Activated CD8-positive, alpha-beta T cell treated with anti-CD3 and anti-CD28 coated beads, Interleukin-2, amount 10 ng/mL, durations not matched to agents 7 days and 5 days (primary cell): ENCODE measurements at regions of chr12 and their contacts with region 1.

Region 1: DNA sequence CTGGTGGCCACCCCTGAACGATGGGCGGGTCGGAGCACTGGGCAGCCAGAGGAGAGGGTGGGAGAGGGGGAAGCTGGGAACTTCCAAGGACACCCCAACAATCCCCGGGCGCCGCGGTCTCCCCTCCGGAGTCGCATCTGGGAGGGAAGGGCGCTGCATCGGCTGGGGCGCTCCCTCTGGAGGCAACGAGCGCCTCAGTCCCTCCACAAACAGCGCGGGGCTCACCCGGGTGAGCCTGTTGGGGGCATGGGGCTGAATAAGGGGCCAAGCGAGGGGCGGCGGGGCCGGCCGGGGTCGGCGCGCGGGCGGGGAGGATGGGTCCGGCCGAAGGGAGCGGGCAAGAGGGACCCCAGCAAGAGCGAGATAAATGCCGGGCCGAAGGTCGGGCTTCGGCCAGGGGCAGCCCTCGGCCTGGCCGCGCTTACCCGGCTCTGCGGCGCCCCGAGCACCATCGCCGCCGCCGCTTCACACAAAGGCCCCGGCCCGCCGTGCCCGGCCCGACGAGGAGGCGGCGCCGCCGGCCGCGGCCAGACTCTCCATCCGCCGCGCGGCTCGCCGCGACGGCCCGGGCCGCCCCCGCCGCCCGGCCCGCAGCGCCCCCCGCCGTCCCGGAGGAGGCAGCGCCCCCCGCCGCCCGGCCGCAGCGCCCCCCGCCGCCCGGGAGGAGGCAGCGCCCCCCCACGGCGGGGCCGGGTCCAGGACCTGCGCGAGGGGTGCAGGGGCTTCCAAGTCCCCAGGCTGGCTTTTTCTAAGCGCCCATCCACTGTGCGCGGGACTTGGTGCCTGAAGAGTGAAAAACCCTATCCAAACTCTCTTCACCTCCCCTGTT is at the start of gene ZBTB39:
- DNase-seq: peak; percentile 68
- ATAC-seq: peak; percentile 79
- H3K4me3 Mint-ChIP-seq: peak within 1 kb of the TSS; percentile 95
- H3K27ac Mint-ChIP-seq: peak within 1 kb of the TSS; percentile 83
- H3K4me1 Mint-ChIP-seq: peaks cover 60% of the 10 kb centered on the region
- H3K27me3 Mint-ChIP-seq: no peaks in the 10 kb centered on the region
- total RNA-seq, gene ZBTB39: 7.7 to 8.2 TPM

Region 2: DNA sequence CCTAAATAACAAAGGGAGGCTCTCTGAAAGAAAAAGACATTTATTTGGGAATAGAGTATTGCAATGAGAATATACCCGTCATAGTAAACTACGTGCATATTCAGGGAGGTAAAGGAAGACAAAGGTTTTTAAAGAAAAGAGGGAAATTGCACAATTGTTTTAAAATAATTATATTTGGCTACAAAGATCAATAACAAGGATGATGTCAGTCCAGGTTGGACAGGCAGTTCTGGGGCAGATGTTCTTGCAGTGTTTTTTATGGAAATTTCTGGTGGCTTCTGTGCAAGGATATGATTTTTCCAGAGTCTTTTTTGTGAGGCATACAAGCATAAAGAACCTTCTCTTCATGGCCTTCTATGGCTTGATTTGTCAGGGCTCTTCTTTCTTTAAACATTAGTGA is 213.5 kb before region 1 on chr12:
- CTCF ChIA-PET with region 1: no interaction called
- POLR2A ChIA-PET with region 1: no interaction called
- DNase-seq: no peak
- ATAC-seq: no peak
- H3K4me3 Mint-ChIP-seq: no peak overlapping the region
- H3K27ac Mint-ChIP-seq: no peak overlapping the region
- H3K4me1 Mint-ChIP-seq: no peaks in the 10 kb centered on the region
- H3K27me3 Mint-ChIP-seq: peaks cover 4% of the 10 kb centered on the region

Region 3: DNA sequence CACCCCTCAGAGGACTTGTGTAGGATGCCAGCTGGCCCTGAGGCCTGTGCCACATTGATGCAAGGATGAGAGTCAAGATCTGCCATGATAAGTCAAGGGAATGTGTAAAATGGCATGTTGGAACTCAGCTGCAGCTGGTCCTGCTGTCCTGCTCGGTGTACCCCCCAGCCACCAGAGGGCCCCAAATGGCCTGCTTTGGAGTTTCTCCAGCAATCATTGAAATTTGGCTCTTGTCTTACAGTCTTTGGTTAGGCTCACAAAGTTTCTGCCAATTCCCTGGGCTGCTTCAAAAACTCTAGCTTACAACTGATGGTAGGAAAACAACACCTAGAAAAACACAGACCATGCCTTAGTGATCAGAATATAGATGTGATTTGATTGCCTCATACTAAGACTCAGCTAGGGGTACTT is 166.3 kb before region 1 on chr12:
- CTCF ChIA-PET with region 1: interaction called, 17 read pairs
- POLR2A ChIA-PET with region 1: no interaction called
- DNase-seq: peak; percentile 51
- ATAC-seq: peak; percentile 47
- H3K4me3 Mint-ChIP-seq: no peak overlapping the region
- H3K27ac Mint-ChIP-seq: no peak overlapping the region
- H3K4me1 Mint-ChIP-seq: peaks cover 13% of the 10 kb centered on the region
- H3K27me3 Mint-ChIP-seq: peaks cover 2% of the 10 kb centered on the region

Region 4: DNA sequence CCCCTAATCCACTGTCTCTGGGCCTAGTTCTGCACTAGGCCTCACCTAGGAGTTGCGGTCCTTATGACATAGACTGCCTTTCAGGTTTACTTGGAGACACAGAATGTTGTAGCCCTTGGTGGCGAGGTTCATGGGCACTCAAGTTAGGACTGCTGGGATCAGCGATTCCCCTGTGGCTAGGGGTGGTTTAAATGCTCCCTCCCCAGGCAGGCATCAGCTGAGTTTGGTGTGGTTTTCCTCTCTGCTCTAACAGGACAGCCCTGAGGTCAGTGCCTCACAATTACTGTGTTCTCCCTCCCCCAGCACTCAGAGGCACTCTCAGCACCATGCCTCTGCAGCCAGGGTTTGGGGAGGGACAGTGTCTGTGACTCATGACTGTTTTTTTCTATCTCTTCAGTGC is 26.6 kb before region 1 on chr12:
- CTCF ChIA-PET with region 1: no interaction called
- POLR2A ChIA-PET with region 1: no interaction called
- DNase-seq: no peak
- ATAC-seq: no peak
- H3K4me3 Mint-ChIP-seq: no peak overlapping the region
- H3K27ac Mint-ChIP-seq: no peak overlapping the region
- H3K4me1 Mint-ChIP-seq: peaks cover 2% of the 10 kb centered on the region
- H3K27me3 Mint-ChIP-seq: no peaks in the 10 kb centered on the region

Region 5: DNA sequence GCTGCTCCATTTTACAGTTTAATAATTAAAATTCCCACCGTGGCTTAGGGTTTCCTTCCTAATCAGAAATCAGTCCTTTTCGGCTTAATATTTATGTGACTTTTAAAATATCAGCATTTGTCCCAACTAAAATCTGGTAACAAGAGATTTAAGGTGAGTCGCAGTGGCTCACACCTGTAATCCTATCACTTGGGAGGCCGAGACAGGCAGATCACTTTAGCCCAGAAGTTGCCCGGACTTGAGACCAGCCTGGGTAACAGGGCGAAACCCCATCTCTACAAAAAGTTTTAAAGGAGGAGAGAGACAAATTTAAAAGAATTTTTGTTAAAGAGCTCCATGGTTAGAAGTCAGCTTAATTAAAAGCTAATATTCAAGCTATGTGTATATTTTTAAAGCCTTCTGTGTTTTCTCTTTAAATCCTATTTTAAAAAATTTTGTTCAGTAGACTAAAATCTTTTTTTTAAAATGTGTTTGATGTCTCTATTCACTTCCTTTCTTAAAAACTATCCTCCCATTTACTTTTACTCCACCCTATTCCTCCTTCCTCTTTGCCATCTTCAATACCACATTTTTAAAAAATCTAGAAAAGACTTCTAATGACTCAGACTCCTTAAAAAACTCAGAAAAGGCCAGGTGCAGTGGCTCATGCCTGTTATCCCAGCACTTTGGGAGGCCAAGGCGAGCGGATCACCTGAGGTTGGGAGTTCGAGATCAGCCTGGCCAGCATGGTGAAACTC is 14.0 kb after region 1 on chr12:
- CTCF ChIA-PET with region 1: interaction called, 29 read pairs
- POLR2A ChIA-PET with region 1: interaction called, 4 read pairs
- DNase-seq: no peak
- ATAC-seq: no peak
- H3K4me3 Mint-ChIP-seq: no peak overlapping the region
- H3K27ac Mint-ChIP-seq: no peak overlapping the region
- H3K4me1 Mint-ChIP-seq: peaks cover 6% of the 10 kb centered on the region
- H3K27me3 Mint-ChIP-seq: peaks cover 3% of the 10 kb centered on the region

Region 6: DNA sequence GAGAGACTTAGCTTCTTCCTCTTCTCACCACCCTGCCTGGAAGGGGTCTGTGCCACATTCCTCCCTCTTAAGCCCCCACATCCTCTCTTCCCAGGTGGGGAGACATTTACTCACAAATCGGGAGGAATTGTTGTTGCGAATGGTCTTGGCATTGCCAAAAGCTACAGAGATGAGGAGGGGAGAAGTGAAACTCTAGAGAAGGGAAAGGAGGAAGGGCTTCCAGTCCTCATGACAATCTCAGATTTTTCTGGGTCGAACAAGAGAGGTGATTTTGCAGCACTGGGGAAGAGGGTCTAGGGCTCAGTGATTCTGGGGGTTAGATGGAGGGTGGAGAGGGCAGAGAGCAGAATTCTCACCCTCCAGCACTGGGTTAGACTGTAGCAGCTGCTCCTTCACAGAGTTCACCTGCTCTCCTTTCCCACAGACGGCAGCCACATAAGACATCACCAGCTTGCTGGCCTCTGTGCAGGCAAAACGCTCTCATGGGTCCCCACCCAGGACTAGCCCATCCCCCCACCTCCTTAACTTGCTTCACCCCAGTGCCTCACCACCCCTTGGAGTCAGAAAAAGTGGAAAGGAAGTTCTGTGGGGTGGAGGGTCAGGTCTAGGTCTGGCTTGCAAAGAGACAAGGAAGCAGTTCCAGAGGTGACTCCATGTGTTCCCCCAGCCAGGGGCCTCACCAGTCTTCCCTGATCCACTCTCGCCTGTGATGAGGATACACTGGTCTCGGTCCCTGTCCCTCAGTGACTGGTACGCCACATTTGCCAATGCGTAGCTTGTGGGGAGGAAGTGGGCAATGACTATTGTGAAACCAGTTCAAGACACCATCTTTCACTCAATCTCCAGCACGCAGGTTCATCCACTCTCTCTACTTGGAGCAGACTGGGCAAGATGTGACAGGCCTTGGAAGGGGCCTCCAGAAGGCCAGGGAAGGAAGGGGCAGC is 41.0 kb after region 1 on chr12:
- CTCF ChIA-PET with region 1: interaction called, 64 read pairs
- POLR2A ChIA-PET with region 1: interaction called, 3 read pairs
- DNase-seq: peak; percentile 84
- ATAC-seq: peak; percentile 83
- H3K4me3 Mint-ChIP-seq: peak overlapping the region; percentile 49
- H3K27ac Mint-ChIP-seq: peak overlapping the region; percentile 86
- H3K4me1 Mint-ChIP-seq: peaks cover 46% of the 10 kb centered on the region
- H3K27me3 Mint-ChIP-seq: no peaks in the 10 kb centered on the region

Region 7: GRCh38 chr12:57063991-57064685 is 57.9 kb after region 1 on chr12:
- CTCF ChIA-PET with region 1: interaction called, 201 read pairs
- POLR2A ChIA-PET with region 1: interaction called, 5 read pairs
- DNase-seq: peak; percentile 73
- ATAC-seq: peak; percentile 90
- H3K4me3 Mint-ChIP-seq: peak overlapping the region; percentile 76
- H3K27ac Mint-ChIP-seq: peak overlapping the region; percentile 89
- H3K4me1 Mint-ChIP-seq: peaks cover 34% of the 10 kb centered on the region
- H3K27me3 Mint-ChIP-seq: no peaks in the 10 kb centered on the region

Region 8: DNA sequence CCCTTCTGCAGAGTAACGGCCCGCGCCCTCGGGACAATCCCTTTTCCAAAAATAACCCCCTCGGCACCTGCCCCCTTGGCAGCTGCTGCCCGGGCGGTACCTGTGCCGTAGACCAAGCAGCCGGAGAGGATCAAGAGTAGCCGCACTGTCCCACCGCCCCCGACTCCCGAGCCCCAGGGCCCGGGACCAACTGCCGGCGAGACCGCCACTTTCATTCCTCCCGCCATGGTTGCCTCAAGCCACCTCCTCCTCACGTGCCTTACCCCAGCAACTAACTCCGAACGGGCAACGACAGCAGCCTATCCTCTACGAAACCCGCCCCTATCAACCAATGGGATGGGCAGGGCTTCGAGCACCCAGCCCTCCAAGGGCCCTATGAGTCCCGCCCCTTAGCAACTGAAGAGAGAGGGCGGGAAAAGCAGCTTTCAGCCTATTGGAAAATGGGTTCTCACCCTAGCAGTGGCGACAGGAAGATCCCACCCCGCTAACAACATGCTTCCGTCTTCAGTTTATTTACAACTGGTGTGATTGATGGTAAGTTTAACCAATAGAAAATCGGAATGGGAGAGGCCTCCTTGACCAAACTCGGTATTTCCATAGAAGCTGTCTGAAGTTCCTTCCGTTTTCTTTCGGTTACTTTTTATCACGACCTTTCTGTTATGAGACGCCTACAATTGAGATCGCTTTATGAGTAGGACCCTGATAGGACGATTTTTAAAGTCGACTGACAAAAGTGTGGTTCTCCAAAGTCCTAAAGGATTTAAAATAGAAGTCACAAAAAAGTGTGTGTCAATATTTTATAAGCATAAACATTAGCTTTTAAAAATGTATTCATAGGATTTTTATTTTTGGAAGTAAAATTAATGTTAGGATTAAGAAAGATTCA is 72.6 kb after region 1 on chr12 and contains the start of gene NEMP1:
- CTCF ChIA-PET with region 1: interaction called, 17 read pairs
- POLR2A ChIA-PET with region 1: interaction called, 4 read pairs
- DNase-seq: peak; percentile 99
- ATAC-seq: peak; percentile 97
- H3K4me3 Mint-ChIP-seq: peak within 1 kb of the TSS; percentile 99
- H3K27ac Mint-ChIP-seq: peak within 1 kb of the TSS; percentile 98
- H3K4me1 Mint-ChIP-seq: peaks cover 29% of the 10 kb centered on the region
- H3K27me3 Mint-ChIP-seq: no peaks in the 10 kb centered on the region
- total RNA-seq, gene NEMP1: 56.4 to 56.9 TPM